Endothelial cell of umbilical vein (primary cell): ENCODE measurements at regions of chr2 and their contacts with region 1.

Region 1: GRCh38 chr2:77521931-77522470 is at the start of gene LRRTM4:
- DNase-seq: no peak
- H3K4me3 ChIP-seq: no peak within 1 kb of the TSS
- H3K27ac ChIP-seq: no peak within 1 kb of the TSS
- H3K4me1 ChIP-seq: no peaks in the 10 kb centered on the region
- H3K27me3 ChIP-seq: no peaks in the 10 kb centered on the region
- CTCF ChIP-seq: no peak
- POLR2A ChIP-seq: no peak
- total RNA-seq, gene LRRTM4: not detected in 2 replicates

Region 2: DNA sequence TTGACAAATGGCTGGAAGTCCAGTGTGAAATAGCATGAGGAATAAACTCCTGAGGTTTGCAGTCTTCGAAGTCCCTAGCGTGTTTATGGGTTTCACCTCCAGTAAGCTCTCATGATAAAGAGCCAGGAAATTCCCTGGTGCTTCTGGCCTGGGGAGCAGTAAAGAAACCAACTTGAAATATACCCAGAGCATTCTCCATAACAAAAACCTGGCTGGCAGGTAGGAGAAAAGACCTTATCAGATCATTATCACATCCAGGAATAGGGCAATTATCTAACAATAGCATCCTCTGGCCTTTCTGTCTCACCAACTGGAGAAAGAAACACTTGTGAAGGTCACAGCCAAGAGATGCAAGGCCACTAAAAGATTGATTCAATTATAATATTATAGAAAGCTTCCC is 513.8 kb after region 1 on chr2:
- CTCF ChIA-PET with region 1: no interaction called
- POLR2A ChIA-PET with region 1: no interaction called
- dilution Hi-C with region 1: no loop called
- intact Hi-C with region 1: loop called (anchors 5 kb)
- DNase-seq: no peak
- H3K4me3 ChIP-seq: no peak overlapping the region
- H3K27ac ChIP-seq: no peak overlapping the region
- H3K4me1 ChIP-seq: no peaks in the 10 kb centered on the region
- H3K27me3 ChIP-seq: no peaks in the 10 kb centered on the region
- CTCF ChIP-seq: no peak
- POLR2A ChIP-seq: no peak